ENCODE measurements at regions of chr17 and their contacts with region 1.

Region 1: GRCh38 chr17:43393944-43394482 is 4.8 kb upstream of the ARL4D start:
- DNase-seq: peak in 1 of 2 experiments; percentile 97
- H3K4me3 ChIP-seq: no peak overlapping the region
- H3K27ac ChIP-seq: no peak overlapping the region
- H3K4me1 ChIP-seq: peaks cover 0 to 3% (median 0%) of the 10 kb centered on the region in 4 experiments; a peak in 3 of 7 replicates
- H3K27me3 ChIP-seq: no peaks in the 10 kb centered on the region
- CTCF ChIP-seq: peak; percentile 56 to 91 (median 91)
- EP300 ChIP-seq: no peak
- POLR2A ChIP-seq: no peak
- RAD21 ChIP-seq: peak; percentile 97

Region 2: DNA sequence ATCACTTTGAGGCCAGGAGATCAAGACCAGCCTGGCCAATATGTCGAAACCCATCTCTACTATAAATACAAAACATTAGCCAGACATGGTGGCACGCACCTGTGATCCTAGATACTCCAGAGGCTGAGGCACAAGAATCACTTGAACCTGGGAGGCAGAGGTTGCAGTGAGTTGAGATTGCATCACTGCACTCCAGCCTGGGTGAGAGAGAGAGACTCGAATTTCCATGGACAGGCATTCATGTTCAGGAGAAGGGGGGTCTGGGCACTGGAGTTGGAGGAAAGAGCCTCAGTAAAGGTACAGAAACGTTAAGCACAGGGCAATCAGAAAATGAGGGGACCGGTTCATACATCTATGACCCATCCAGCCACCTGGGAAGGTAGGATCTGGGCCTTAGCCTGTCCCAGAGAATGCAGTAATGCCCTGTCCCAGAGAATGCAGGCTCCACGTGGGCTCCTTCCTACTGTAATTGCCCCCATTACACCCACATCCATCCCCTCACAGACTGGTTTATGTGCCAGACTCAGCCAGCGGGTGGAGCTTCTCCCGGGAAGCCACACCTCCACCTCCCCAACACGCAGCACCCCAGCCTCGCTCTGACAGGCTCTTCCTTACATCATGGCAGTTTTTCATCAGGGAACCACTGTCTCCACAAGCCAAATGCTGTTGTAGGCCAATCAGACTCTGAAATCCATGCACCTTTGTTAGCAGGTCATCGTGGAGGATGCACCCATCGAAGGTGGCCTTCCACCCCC is 16.8 kb before region 1 on chr17:
- CTCF ChIA-PET with region 1: interaction called, 17 read pairs
- POLR2A ChIA-PET with region 1: interaction called, 184 read pairs
- DNase-seq: peak in 1 of 2 experiments; percentile 63
- H3K4me3 ChIP-seq: no peak overlapping the region
- H3K27ac ChIP-seq: no peak overlapping the region
- H3K4me1 ChIP-seq: peaks cover 0 to 3% (median 0%) of the 10 kb centered on the region in 4 experiments; a peak in 2 of 7 replicates
- H3K27me3 ChIP-seq: no peaks in the 10 kb centered on the region
- CTCF ChIP-seq: no peak
- EP300 ChIP-seq: no peak
- POLR2A ChIP-seq: no peak
- RAD21 ChIP-seq: no peak

Region 3: GRCh38 chr17:43406676-43407645 is 12.9 kb after region 1 on chr17:
- CTCF ChIA-PET with region 1: interaction called, 20 read pairs
- POLR2A ChIA-PET with region 1: interaction called, 37 read pairs
- DNase-seq: no peak
- H3K4me3 ChIP-seq: no peak overlapping the region
- H3K27ac ChIP-seq: no peak overlapping the region
- H3K4me1 ChIP-seq: peaks cover 0 to 6% (median 2%) of the 10 kb centered on the region in 4 experiments; a peak in 3 of 7 replicates
- H3K27me3 ChIP-seq: no peaks in the 10 kb centered on the region
- CTCF ChIP-seq: no peak
- EP300 ChIP-seq: no peak
- POLR2A ChIP-seq: no peak
- RAD21 ChIP-seq: no peak

Region 4: DNA sequence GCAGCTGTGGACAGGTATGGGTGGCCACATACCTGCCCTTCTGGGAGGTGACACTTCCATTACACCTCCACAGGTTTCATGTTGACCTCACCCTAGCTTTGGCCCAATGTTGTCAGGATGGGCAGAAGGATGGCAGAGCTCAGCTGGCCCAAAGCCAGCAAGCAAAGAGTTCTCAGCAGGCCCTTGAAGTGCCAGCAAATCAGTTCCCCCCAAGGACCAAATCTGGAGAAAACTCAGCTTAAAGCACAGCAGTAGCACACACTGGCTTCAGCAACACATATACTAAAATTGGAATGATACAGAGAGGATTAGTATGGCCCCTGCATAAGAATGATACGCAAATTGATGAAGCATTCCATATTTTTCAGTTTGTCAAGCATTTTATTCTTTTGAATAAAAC is 18.2 kb after region 1 on chr17:
- CTCF ChIA-PET with region 1: interaction called, 28 read pairs
- POLR2A ChIA-PET with region 1: interaction called, 37 read pairs
- DNase-seq: no peak
- H3K4me3 ChIP-seq: no peak overlapping the region
- H3K27ac ChIP-seq: no peak overlapping the region
- H3K4me1 ChIP-seq: peaks cover 0 to 2% (median 0%) of the 10 kb centered on the region in 4 experiments; a peak in 2 of 7 replicates
- H3K27me3 ChIP-seq: no peaks in the 10 kb centered on the region
- CTCF ChIP-seq: no peak
- EP300 ChIP-seq: no peak
- POLR2A ChIP-seq: no peak
- RAD21 ChIP-seq: no peak

Region 5: DNA sequence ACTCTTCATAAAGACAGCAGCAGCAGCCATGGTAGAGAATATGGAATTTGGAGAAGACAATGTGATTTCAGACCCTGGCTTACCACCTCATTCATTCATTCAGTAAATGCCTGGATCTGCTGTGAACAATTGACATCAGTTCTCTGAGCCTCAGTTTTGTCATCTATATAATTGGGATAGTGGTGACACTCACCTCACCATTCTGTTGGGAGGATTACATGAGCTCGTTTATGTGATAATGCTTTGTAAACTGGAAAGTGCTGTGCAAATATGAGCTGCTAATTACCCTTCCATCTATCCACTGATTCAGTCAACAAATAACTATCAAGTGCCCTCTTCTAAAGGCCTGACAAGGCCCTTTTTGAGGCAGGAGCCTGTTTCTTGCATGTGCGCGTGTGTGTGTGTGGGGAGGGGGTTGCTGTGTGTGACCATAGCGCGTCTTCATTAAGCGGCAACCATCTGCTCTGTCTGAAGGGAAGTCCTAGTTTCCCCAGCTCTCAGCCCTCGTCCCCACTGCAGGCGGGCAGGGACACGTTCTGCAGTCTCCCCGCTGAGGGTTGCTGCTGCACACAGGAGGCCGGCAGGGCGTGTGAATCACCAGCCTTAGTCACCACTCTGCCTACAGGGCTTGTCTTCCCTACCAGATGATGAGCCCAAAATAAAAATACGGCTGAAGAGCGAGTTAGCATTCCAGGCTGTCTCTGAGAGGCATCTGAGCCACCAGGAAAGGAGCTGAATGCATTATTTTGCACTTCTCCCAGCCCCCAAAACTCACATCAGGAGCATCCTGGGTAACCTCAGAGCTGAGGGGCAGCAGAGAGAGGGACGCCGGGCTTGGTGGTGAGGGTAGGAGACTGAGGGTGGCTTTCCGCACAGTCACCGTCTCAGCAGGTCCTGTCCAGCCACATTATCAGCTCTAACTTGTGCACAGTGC is 24.7 kb after region 1 on chr17:
- CTCF ChIA-PET with region 1: interaction called, 132 read pairs
- POLR2A ChIA-PET with region 1: interaction called, 37 read pairs
- DNase-seq: no peak
- H3K4me3 ChIP-seq: no peak overlapping the region
- H3K27ac ChIP-seq: no peak overlapping the region
- H3K4me1 ChIP-seq: peaks cover 0 to 5% (median 0%) of the 10 kb centered on the region in 4 experiments; a peak in 2 of 7 replicates
- H3K27me3 ChIP-seq: no peaks in the 10 kb centered on the region
- CTCF ChIP-seq: no peak; a peak in 1 of 4 replicates
- EP300 ChIP-seq: no peak
- POLR2A ChIP-seq: no peak
- RAD21 ChIP-seq: no peak

Region 6: DNA sequence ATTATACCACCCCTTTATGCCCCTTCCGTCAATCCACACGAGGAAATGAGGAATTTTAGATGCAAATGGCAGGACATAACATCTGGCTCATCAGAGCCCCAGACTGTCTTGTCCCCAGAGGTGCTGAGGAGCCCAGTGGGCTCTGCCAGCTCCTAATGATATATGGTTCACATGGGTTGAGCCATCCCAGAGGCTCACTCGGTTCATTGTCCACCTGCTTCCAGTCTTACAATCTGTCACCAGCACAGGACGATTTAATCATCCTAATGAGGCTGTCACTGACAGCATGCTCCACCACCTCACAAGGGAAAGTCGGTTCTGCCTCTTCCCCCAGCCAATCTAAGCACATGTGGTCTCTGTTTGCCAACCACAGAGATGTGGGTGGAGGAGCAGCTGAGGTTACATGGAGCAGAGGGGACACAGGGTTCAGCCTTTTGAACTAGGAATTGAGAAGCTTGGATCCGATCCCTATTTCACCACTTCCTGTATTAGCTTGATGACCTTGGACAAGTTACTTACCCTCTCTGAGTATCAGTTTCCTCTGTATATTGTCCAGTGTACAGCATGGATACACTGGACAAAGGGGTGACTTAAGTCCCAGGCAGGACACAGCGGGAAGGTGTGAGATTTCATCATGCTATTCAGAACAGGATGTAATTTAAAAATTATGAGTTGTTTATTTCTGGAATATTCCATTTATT is 62.8 kb after region 1 on chr17:
- CTCF ChIA-PET with region 1: interaction called, 18 read pairs
- POLR2A ChIA-PET with region 1: interaction called, 9 read pairs
- DNase-seq: no peak
- H3K4me3 ChIP-seq: no peak overlapping the region
- H3K27ac ChIP-seq: no peak overlapping the region
- H3K4me1 ChIP-seq: peaks cover 0 to 4% (median 2%) of the 10 kb centered on the region in 4 experiments; a peak in 2 of 7 replicates
- H3K27me3 ChIP-seq: no peaks in the 10 kb centered on the region
- CTCF ChIP-seq: no peak
- EP300 ChIP-seq: no peak
- POLR2A ChIP-seq: no peak
- RAD21 ChIP-seq: no peak

Region 7: GRCh38 chr17:43861024-43861621 is 467.1 kb after region 1 on chr17:
- CTCF ChIA-PET with region 1: no interaction called
- POLR2A ChIA-PET with region 1: no interaction called
- DNase-seq: no peak
- H3K4me3 ChIP-seq: no peak overlapping the region
- H3K27ac ChIP-seq: no peak overlapping the region
- H3K4me1 ChIP-seq: peaks cover 0 to 4% (median under 1%) of the 10 kb centered on the region in 4 experiments; a peak in 3 of 7 replicates
- H3K27me3 ChIP-seq: no peaks in the 10 kb centered on the region
- CTCF ChIP-seq: no peak
- EP300 ChIP-seq: no peak
- POLR2A ChIP-seq: no peak
- RAD21 ChIP-seq: no peak

Measured in H1 (cell line).